Ascending aorta (tissue), 2 donors: ENCODE measurements at regions of chr7 and their contacts with region 1.

Region 1: DNA sequence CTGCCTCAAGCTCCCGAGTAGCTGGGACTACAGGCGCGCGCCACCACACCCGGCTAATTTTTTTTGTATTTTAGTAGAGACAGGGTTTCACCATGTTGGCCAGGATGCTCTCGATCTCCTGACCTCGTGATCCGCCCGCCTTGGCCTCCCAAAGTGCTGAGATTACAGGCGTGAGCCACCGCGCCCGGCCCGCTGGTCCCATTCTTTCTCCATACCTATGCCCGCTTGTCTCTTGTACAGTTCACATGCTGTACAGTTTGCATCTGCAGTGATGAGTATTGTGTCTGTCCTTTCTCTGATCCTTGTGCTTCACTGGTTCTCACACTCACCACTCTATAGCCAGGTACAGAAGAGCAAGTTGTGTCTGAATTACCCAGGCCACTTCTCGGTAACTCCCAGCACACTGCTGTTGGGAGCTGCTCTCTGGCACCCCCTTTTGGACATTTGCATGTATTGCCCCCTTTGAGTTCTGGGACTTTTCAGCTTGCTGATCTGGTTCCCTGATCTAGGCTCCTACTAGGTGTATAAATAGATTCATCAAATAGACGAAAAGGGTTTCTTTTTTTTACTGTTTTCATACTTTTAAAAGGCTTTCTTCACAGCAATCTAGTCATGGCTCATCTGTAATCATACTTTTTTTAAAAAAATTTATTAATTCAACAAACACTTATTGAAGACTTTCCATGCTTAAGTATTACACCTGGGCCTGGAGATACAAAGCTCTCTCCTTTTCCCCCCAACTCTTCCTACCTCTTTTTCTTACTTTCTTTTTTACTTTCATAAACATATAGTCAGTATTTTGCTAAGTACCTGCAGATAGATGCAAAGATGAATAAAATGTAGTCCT is 53.5 kb downstream of the AOAH start:
- DNase-seq: no peak
- H3K4me3 ChIP-seq: no peak overlapping the region
- H3K27ac ChIP-seq: no peak overlapping the region
- H3K4me1 ChIP-seq: no peaks in the 10 kb centered on the region
- H3K27me3 ChIP-seq: no peaks in the 10 kb centered on the region
- CTCF ChIP-seq: peak; percentile 37 to 68 (median 52)

Region 2: DNA sequence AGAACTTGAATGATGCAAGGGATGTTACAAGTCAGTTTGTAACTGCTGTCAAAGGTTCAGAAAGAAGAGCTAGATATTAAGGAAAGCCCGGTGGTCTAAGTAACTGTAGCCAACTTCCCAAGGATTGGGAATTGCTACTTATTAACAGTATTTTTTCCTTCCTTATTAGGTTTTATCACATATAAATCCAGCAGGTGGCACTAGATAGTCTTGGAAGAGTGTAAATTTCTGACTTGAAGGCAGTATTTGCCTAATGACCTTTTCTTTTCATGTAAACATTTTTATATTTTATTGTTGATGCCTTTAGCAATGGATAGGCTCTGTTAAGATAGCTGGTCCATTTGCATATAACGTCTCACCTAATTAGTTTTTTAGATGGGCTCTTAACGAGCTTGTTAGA is 229.9 kb before region 1 on chr7:
- intact Hi-C with region 1: loop called (anchors 5 kb)
- DNase-seq: no peak
- H3K4me3 ChIP-seq: no peak overlapping the region
- H3K27ac ChIP-seq: no peak overlapping the region
- H3K4me1 ChIP-seq: no peaks in the 10 kb centered on the region
- H3K27me3 ChIP-seq: no peaks in the 10 kb centered on the region
- CTCF ChIP-seq: peak in 2 of 3 experiments; percentile 31 to 53

Region 3: DNA sequence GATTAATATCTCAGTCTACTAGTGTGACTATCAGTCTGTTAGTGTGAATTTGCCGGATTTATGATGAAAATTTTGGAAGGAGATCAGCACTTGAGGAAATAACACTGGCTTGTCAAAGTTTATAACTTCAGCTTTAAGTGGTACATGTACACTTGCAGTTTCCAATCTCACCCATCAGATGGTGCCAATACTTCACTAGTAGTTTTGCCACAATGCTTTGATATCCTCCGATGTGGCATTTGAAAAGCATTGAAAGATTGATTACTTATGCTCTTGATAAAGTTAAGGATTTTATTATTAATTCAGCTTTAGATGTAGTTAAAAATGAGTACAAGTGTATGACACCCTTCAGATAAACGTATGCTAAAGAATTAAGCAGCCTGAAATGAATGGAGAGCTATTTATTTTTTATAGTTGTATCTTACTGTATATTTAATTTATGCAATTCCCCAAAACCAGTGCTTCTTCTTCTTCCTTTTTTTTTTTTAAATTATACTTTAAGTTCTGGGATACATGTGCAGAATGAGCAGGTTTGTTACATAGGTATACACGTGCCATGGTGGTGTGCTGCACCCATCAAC is 183.0 kb before region 1 on chr7:
- intact Hi-C with region 1: no loop called
- DNase-seq: no peak
- H3K4me3 ChIP-seq: no peak overlapping the region
- H3K27ac ChIP-seq: no peak overlapping the region
- H3K4me1 ChIP-seq: no peaks in the 10 kb centered on the region
- H3K27me3 ChIP-seq: no peaks in the 10 kb centered on the region
- CTCF ChIP-seq: peak in 2 of 3 experiments; percentile 25 to 41